ENCODE measurements at regions of chr9 and their contacts with region 1.

Region 1: GRCh38 chr9:22200324-22200723 is 191.2 kb upstream of the CDKN2B start:
- DNase-seq: no peak
- ATAC-seq: no peak
- H3K4me3 ChIP-seq: no peak overlapping the region
- H3K27ac ChIP-seq: no peak overlapping the region
- H3K4me1 ChIP-seq: peaks cover 0 to 6% (median 0%) of the 10 kb centered on the region in 12 donors
- H3K27me3 ChIP-seq: peaks cover 0 to 7% (median 0%) of the 10 kb centered on the region in 9 donors
- CTCF ChIP-seq: no peak
- POLR2A ChIP-seq: no peak

Region 2: GRCh38 chr9:22189471-22189870 is 10.9 kb before region 1 on chr9:
- intact Hi-C with region 1: loop called in 1 of 10 experiments (anchors 1 kb)
- DNase-seq: no peak
- ATAC-seq: no peak
- H3K4me3 ChIP-seq: no peak overlapping the region
- H3K27ac ChIP-seq: no peak overlapping the region
- H3K4me1 ChIP-seq: no peaks in the 10 kb centered on the region
- H3K27me3 ChIP-seq: peaks cover 0 to 2% (median 0%) of the 10 kb centered on the region in 9 donors
- CTCF ChIP-seq: no peak
- POLR2A ChIP-seq: no peak

Region 3: DNA sequence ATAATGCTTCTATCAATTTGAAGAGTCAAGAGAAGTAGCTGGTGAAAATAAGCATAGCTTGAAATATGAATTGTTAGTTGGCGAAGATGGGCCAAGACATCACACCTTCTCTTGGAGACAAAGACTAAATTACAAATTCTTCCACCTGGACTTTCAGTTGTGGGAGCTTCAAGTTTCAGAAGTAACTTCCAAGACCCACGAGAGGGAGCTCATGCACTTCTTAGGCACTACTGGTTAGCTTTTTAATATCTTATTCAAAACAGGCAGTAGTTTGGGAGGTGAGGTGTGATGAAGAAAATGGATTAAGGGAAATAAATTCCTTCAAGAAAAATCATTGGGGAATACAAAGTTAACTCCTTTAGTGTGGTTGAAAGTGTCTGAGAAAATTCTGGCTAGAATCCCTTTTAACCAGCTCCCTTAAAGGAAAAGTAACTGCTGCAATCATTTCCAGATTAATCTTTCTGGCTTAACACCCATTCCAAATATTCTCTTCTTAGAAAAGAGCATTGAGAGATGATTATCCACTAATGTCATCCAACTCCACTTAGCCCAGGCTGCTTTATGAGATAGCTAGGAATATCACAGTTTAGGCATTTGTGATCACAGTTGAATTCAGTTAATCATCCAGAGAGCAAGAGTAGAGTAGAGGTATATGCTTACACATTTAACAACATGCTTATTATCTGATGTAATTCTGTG is 106.8 kb after region 1 on chr9:
- intact Hi-C with region 1: no loop called
- DNase-seq: no peak
- ATAC-seq: peak in 1 of 4 donors; percentile 57
- H3K4me3 ChIP-seq: no peak overlapping the region
- H3K27ac ChIP-seq: no peak overlapping the region
- H3K4me1 ChIP-seq: no peaks in the 10 kb centered on the region
- H3K27me3 ChIP-seq: peaks cover 0 to 13% (median 0%) of the 10 kb centered on the region in 9 donors
- CTCF ChIP-seq: peak; percentile 29 to 67 (median 50)
- POLR2A ChIP-seq: no peak

Measured in heart left ventricle (tissue), 16 donors.